Endothelial cell of umbilical vein (primary cell): ENCODE measurements at regions of chr5 and their contacts with region 1.

Region 1: DNA sequence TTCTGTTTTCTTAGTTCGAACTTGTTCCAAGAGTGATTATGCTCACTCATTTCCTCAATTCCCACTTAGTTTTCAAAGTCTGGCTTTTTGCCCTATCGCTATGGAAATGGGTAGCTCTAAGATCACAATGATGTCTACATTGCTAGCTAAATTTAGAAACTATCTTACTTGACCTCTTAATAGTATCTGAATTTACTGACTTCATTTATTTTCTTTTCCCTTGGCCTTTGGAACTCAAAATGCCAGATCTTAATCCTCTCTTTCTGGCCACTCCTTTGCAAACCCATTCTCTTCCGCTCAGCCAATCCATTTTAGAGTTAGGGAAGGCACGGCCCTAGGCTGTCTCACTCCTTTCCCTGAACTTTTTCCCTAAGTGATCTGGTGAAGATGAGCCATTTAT is 137.0 kb downstream of the FER start:
- DNase-seq: peak; percentile 96
- H3K4me3 ChIP-seq: no peak overlapping the region
- H3K27ac ChIP-seq: peak overlapping the region; percentile 75
- H3K4me1 ChIP-seq: peaks cover 13% of the 10 kb centered on the region
- H3K27me3 ChIP-seq: no peaks in the 10 kb centered on the region
- CTCF ChIP-seq: no peak
- POLR2A ChIP-seq: no peak

Region 2: DNA sequence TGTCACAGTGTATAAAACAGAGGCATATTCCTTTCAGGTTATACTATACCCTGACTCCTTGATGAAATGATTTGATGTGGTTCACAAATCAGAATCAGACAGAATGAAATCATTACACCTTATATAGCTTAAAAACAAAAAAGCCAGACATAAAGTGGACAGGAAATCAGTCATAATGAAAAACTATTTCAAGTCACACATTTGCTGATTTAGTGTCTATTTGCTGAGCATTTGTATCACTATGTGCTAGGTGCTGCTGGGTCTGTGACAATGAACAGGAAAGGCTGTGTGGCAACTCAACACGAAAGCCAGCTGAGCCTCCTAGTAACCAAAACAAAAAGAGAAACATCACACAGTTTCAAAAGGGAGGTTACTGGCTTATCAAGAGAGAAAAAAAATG is 1408.0 kb before region 1 on chr5:
- CTCF ChIA-PET with region 1: no interaction called
- POLR2A ChIA-PET with region 1: no interaction called
- dilution Hi-C with region 1: no loop called
- intact Hi-C with region 1: no loop called
- DNase-seq: peak; percentile 94
- H3K4me3 ChIP-seq: no peak overlapping the region
- H3K27ac ChIP-seq: peak overlapping the region; percentile 93
- H3K4me1 ChIP-seq: peaks cover 46% of the 10 kb centered on the region
- H3K27me3 ChIP-seq: no peaks in the 10 kb centered on the region
- CTCF ChIP-seq: no peak
- POLR2A ChIP-seq: no peak

Region 3: GRCh38 chr5:108900668-108901067 is 15.9 kb after region 1 on chr5:
- CTCF ChIA-PET with region 1: interaction called, 5 read pairs
- POLR2A ChIA-PET with region 1: no interaction called
- dilution Hi-C with region 1: no loop called
- intact Hi-C with region 1: loop called (anchors 1 kb)
- DNase-seq: peak; percentile 24
- H3K4me3 ChIP-seq: no peak overlapping the region
- H3K27ac ChIP-seq: no peak overlapping the region
- H3K4me1 ChIP-seq: peaks cover 21% of the 10 kb centered on the region
- H3K27me3 ChIP-seq: no peaks in the 10 kb centered on the region
- CTCF ChIP-seq: no peak
- POLR2A ChIP-seq: no peak